Activated B cell treated with CpG ODN at 0.5 μM for 24 hours (primary cell): ENCODE measurements at regions of chr13 and their contacts with region 1.

Region 1: GRCh38 chr13:95067303-95067702 is 233.9 kb downstream of the ABCC4 start:
- DNase-seq: no peak
- ATAC-seq: no peak
- H3K4me3 Mint-ChIP-seq: no peak overlapping the region
- H3K27ac Mint-ChIP-seq: no peak overlapping the region
- H3K4me1 Mint-ChIP-seq: no peaks in the 10 kb centered on the region
- H3K27me3 Mint-ChIP-seq: no peaks in the 10 kb centered on the region
- CTCF ChIP-seq: no peak

Region 2: GRCh38 chr13:95050800-95051615 is 16.3 kb before region 1 on chr13:
- CTCF ChIA-PET with region 1: no interaction called
- POLR2A ChIA-PET with region 1: no interaction called
- intact Hi-C with region 1: loop called (anchors 2 kb)
- DNase-seq: no peak
- ATAC-seq: no peak
- H3K4me3 Mint-ChIP-seq: no peak overlapping the region
- H3K27ac Mint-ChIP-seq: no peak overlapping the region
- H3K4me1 Mint-ChIP-seq: no peaks in the 10 kb centered on the region
- H3K27me3 Mint-ChIP-seq: no peaks in the 10 kb centered on the region
- CTCF ChIP-seq: no peak